Left colon (tissue), 2 donors: ENCODE measurements at regions of chr13 and their contacts with region 1.

Region 1: GRCh38 chr13:29595380-29596063 is at the start of gene SLC7A1:
- DNase-seq: peak; percentile 79 to 85
- ATAC-seq: peak; percentile 86
- total RNA-seq, gene SLC7A1: 39.9 to 56.9 TPM

Region 2: GRCh38 chr13:29849731-29850223 is 254.3 kb after region 1 on chr13:
- intact Hi-C with region 1: loop called in 1 of 2 experiments (anchors 10 kb)
- DNase-seq: peak; percentile 54 to 75
- ATAC-seq: peak; percentile 41